ENCODE measurements at regions of chr17 and their contacts with region 1.

Region 1: GRCh38 chr17:58329035-58329809 is 627 bp upstream of the TSPOAP1 start:
- DNase-seq: peak; percentile 92
- H3K4me3 Mint-ChIP-seq: peak overlapping the region; percentile 92
- H3K27ac Mint-ChIP-seq: peak overlapping the region; percentile 98
- H3K4me1 Mint-ChIP-seq: peaks cover 44% of the 10 kb centered on the region
- H3K27me3 Mint-ChIP-seq: peaks cover 25% of the 10 kb centered on the region

Region 2: DNA sequence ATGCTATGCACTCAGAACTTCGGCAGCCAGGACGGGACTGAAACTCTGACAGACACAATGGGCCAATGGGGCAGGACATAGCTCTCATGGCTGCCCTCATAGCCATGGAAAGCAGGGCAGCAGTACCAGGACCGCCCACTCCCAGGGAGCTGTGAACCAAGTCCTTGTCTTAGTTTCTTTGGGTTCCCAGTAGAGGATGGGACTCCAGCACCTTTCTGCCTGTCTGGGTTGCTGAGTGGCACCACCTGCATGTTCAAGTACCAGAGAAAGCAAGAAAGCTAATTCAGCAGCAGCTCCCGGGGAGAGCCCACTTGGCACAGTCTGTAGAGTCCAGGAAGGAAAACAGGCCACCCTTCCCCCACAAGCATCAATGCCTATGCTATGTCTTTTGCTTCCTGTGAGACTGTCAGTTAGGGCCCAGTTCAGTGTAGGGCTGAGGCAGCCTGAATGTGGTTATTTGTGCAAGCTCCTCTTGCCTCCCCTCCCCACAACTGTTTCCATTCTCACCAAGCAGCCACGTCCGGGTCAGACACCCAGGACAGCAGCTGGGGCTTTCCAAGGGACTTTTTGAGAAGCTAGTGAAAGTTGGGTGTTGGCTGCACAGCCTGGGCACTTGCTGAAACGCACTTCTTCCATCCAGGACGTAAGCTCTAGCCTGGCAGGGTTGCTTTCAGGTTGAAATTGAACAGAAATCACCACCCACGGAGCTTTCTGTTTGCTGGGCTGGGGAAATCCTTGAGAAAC is 15.0 kb after region 1 on chr17:
- CTCF ChIA-PET with region 1: interaction called, 58 read pairs
- POLR2A ChIA-PET with region 1: interaction called, 1,114 read pairs
- intact Hi-C with region 1: loop called (anchors 1 kb)
- DNase-seq: peak; percentile 97
- H3K4me3 Mint-ChIP-seq: peak overlapping the region; percentile 92
- H3K27ac Mint-ChIP-seq: peak overlapping the region; percentile 98
- H3K4me1 Mint-ChIP-seq: peaks cover 56% of the 10 kb centered on the region
- H3K27me3 Mint-ChIP-seq: no peaks in the 10 kb centered on the region

Region 3: DNA sequence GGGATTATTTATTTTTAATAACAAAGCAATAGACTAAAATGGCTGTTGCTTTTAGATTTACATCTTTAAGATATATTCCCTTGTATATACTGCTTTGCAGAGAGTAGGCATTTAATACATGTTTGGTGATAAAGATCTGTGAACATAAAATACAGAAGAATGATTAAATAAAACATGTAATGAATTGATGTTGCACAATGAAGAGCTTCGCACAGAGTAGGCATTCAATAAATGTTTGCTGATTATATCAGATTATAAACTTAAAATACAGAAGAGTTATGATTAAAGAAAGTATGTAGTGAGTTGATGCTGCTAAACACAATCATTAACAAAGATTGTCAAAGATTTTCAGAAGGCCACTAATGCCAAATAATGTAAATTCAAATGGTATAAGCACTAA is 134.6 kb after region 1 on chr17:
- CTCF ChIA-PET with region 1: no interaction called
- POLR2A ChIA-PET with region 1: no interaction called
- intact Hi-C with region 1: no loop called
- DNase-seq: no peak
- H3K4me3 Mint-ChIP-seq: no peak overlapping the region
- H3K27ac Mint-ChIP-seq: no peak overlapping the region
- H3K4me1 Mint-ChIP-seq: no peaks in the 10 kb centered on the region
- H3K27me3 Mint-ChIP-seq: no peaks in the 10 kb centered on the region